ENCODE measurements at regions of chr15 and their contacts with region 1.

Region 1: GRCh38 chr15:90062023-90062442 is 40.2 kb downstream of the IDH2 start:
- DNase-seq: no peak
- H3K4me3 ChIP-seq: no peak overlapping the region
- H3K27ac ChIP-seq: no peak overlapping the region
- H3K4me1 ChIP-seq: peaks cover 0 to 49% (median 30%) of the 10 kb centered on the region in 4 donors
- H3K27me3 ChIP-seq: no peaks in the 10 kb centered on the region
- CTCF ChIP-seq: no peak

Region 2: GRCh38 chr15:89912674-89913396 is 149.2 kb before region 1 on chr15 and contains the start of gene ARPIN:
- intact Hi-C with region 1: loop called (anchors 5 kb)
- DNase-seq: peak; percentile 35 to 77
- H3K4me3 ChIP-seq: peak within 1 kb of the TSS; percentile 88 to 95
- H3K27ac ChIP-seq: peak within 1 kb of the TSS; percentile 77 to 84
- H3K4me1 ChIP-seq: peaks cover 0 to 19% (median 15%) of the 10 kb centered on the region in 4 donors
- H3K27me3 ChIP-seq: no peaks in the 10 kb centered on the region
- CTCF ChIP-seq: no peak

Region 3: GRCh38 chr15:90001683-90002427 is 60.2 kb before region 1 on chr15:
- intact Hi-C with region 1: loop called (anchors 10 kb)
- DNase-seq: peak; percentile 60 to 82
- H3K4me3 ChIP-seq: peak overlapping the region; percentile 64 to 90
- H3K27ac ChIP-seq: peak overlapping the region; percentile 68 to 89
- H3K4me1 ChIP-seq: peaks cover 0 to 60% (median 25%) of the 10 kb centered on the region in 4 donors
- H3K27me3 ChIP-seq: no peaks in the 10 kb centered on the region
- CTCF ChIP-seq: no peak